ENCODE measurements at regions of chr6 and their contacts with region 1.

Region 1: GRCh38 chr6:75243333-75244062 is at the start of gene COX7A2:
- DNase-seq: peak; percentile 95
- H3K4me3 Mint-ChIP-seq: peak within 1 kb of the TSS; percentile 99
- H3K27ac Mint-ChIP-seq: peak within 1 kb of the TSS; percentile 100
- H3K4me1 Mint-ChIP-seq: peaks cover 15% of the 10 kb centered on the region
- H3K27me3 Mint-ChIP-seq: no peaks in the 10 kb centered on the region
- CTCF ChIP-seq: no peak
- total RNA-seq, gene COX7A2: 316 and 375 TPM in 2 replicates

Region 2: DNA sequence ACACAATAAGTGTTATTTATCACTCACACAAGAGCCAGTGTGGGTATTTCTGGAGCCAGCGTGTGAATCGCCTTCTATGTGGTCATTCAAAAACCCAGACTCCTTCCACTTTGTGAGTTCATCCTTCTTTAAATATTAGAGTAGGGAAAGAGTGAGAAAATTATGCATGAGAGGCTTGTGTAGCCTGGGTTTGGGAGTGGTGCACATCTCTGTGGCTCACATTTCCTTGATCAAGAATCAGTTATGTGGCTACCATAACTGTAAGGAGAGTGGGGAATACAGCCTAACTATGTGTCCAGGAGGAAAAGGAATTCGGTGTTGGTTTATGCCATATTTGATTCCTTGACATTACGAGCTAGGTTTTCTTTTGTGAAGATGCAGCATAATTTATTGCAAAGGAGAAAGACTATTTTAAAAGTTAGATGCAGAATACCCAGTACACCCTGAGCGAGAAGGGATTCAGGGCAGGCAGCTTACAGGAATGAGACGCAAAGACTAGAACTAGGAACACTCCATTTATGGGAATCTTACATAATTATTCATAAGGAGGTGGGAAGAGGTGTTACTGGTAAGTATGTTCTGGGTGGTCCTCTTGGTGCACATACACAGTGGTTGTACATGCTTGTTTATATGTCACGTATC is 676.1 kb before region 1 on chr6:
- CTCF ChIA-PET with region 1: no interaction called
- POLR2A ChIA-PET with region 1: no interaction called
- intact Hi-C with region 1: no loop called
- DNase-seq: no peak
- H3K4me3 Mint-ChIP-seq: no peak overlapping the region
- H3K27ac Mint-ChIP-seq: no peak overlapping the region
- H3K4me1 Mint-ChIP-seq: no peaks in the 10 kb centered on the region
- H3K27me3 Mint-ChIP-seq: no peaks in the 10 kb centered on the region
- CTCF ChIP-seq: no peak

Region 3: DNA sequence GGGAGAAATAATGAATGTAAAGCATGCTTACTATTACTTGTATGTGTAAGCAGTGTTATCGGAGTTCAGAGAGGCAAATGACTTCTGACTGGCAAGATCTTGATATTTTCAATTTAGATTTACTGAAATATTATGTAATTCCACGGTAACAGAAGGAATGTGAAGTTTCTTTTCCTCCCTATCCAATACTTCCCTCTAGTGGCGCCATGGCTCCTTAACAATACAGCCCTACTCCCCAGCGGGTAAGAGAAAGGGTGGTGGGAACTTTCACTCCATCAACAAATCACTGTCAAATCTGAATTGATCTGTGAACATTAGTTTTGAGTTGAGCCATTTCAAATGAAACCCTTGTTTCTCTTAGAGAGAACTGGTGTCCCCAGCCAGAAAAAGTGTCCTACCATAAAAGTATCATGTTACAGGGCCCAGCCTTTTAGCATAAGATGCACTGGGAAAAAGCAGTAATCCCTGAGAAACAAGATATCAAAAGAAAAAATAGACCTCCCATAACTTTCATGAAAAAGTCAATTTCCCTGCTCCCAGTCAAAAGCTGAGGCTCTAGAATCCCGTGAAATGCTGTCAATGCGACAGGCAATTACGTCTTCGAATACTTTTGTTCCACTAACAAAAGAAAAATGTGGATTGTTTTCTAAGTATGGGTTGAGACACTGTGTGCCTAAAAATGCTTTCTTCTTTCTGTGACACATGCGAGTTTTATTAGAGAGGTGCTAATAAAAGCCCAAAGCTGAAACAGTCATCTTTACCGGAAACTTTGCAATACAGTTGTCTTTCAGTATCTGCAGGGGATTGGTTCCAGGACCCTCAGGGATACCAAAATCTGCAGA is 12.8 kb before region 1 on chr6:
- CTCF ChIA-PET with region 1: interaction called, 3 read pairs
- POLR2A ChIA-PET with region 1: interaction called, 23 read pairs
- intact Hi-C with region 1: no loop called
- DNase-seq: peak; percentile 67
- H3K4me3 Mint-ChIP-seq: no peak overlapping the region
- H3K27ac Mint-ChIP-seq: no peak overlapping the region
- H3K4me1 Mint-ChIP-seq: no peaks in the 10 kb centered on the region
- H3K27me3 Mint-ChIP-seq: no peaks in the 10 kb centered on the region
- CTCF ChIP-seq: peak; percentile 66

Region 4: GRCh38 chr6:75257343-75258087 is 14.0 kb after region 1 on chr6:
- CTCF ChIA-PET with region 1: no interaction called
- POLR2A ChIA-PET with region 1: interaction called, 37 read pairs
- intact Hi-C with region 1: no loop called
- DNase-seq: no peak
- H3K4me3 Mint-ChIP-seq: no peak overlapping the region
- H3K27ac Mint-ChIP-seq: no peak overlapping the region
- H3K4me1 Mint-ChIP-seq: no peaks in the 10 kb centered on the region
- H3K27me3 Mint-ChIP-seq: no peaks in the 10 kb centered on the region
- CTCF ChIP-seq: no peak

Region 5: DNA sequence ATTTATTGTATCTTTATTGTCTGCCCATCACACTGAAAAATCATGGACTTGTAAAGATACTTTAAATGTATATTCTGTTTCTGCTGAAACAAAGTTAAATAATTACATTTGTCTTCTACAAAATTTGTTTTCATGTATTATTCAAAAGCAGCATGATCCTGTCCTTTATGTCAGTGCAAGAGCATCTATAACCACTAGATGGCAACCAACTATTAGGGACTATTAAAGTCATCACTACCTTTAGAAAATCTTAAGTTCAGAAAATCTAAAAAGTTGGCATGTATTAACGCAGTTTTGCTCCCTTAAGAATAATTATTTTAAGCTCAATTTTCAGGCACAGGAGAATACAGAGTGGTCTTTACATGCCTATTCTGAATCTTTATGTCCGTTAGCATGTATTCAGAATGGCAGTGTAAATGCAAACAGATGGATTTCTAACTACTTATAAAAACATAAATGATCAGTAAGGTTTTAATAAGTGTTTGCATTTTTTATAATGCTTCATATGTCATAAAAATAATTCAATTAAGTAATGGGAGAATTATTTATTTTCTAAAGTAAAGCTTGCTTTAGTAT is 23.3 kb after region 1 on chr6:
- CTCF ChIA-PET with region 1: interaction called, 10 read pairs
- POLR2A ChIA-PET with region 1: interaction called, 50 read pairs
- intact Hi-C with region 1: no loop called
- DNase-seq: peak; percentile 65
- H3K4me3 Mint-ChIP-seq: no peak overlapping the region
- H3K27ac Mint-ChIP-seq: no peak overlapping the region
- H3K4me1 Mint-ChIP-seq: peaks cover 12% of the 10 kb centered on the region
- H3K27me3 Mint-ChIP-seq: no peaks in the 10 kb centered on the region
- CTCF ChIP-seq: peak; percentile 55

Region 6: GRCh38 chr6:75275067-75275466 is 31.6 kb after region 1 on chr6:
- CTCF ChIA-PET with region 1: no interaction called
- POLR2A ChIA-PET with region 1: interaction called, 50 read pairs
- intact Hi-C with region 1: no loop called
- DNase-seq: peak; percentile 39
- H3K4me3 Mint-ChIP-seq: no peak overlapping the region
- H3K27ac Mint-ChIP-seq: peak overlapping the region; percentile 53
- H3K4me1 Mint-ChIP-seq: peaks cover 65% of the 10 kb centered on the region
- H3K27me3 Mint-ChIP-seq: no peaks in the 10 kb centered on the region
- CTCF ChIP-seq: no peak

Region 7: GRCh38 chr6:75284632-75285286 is 41.3 kb after region 1 on chr6 and contains the start of gene TMEM30A:
- CTCF ChIA-PET with region 1: interaction called, 3 read pairs
- POLR2A ChIA-PET with region 1: interaction called, 53 read pairs
- intact Hi-C with region 1: no loop called
- DNase-seq: peak; percentile 99
- H3K4me3 Mint-ChIP-seq: no peak within 1 kb of the TSS
- H3K27ac Mint-ChIP-seq: no peak within 1 kb of the TSS
- H3K4me1 Mint-ChIP-seq: peaks cover 21% of the 10 kb centered on the region
- H3K27me3 Mint-ChIP-seq: no peaks in the 10 kb centered on the region
- CTCF ChIP-seq: no peak
- total RNA-seq, gene TMEM30A: 53.7 and 71.4 TPM in 2 replicates

Region 8: DNA sequence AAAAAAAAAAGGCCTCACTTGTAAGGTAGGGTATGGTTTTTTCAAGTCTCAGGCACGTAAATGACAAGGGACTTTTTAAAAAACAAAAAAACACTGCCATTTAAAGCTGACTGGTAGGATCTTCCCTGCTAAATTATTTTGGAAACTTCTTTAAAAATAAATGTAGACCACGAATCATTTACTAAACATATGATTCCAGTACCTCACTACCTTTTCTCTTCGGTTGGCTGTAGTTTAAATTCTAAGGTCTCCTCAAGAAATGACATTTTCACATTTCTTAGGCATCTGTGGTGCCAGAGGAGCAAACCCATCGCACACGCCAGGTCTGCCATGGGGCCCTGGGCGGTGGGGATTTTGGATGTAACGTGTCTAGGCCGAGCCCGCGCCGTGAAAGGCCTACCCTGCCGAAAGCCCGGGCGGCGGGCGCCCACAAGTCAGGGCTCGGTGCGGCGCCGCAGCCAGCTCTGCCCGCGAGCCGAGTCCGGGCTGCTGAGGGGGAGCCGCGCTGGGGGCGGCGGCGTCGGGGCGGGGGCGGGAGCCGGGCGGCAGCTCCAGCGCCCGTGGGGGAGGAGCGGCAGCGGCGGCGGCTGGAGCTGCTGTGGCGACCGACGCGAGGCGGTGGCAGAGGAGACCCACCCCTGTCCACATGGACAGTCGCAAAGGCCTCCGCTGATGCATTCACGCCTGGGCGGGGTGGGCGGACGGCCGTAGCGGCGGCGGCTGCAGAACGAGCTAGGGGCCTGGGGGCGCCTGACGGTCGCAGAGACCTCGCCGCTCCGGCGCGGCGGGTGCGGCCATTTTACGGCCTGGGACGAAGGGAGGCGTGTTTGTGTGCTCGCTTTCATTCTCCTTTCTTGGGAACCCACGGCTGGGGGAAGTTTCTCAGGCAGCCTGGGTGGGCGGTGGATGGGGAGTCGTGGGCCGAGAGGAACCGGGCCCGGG is 358.1 kb after region 1 on chr6 and contains the start of gene SENP6:
- CTCF ChIA-PET with region 1: no interaction called
- POLR2A ChIA-PET with region 1: interaction called, 22 read pairs
- intact Hi-C with region 1: no loop called
- DNase-seq: peak; percentile 76
- H3K4me3 Mint-ChIP-seq: peak within 1 kb of the TSS; percentile 97
- H3K27ac Mint-ChIP-seq: peak within 1 kb of the TSS; percentile 100
- H3K4me1 Mint-ChIP-seq: peaks cover 15% of the 10 kb centered on the region
- H3K27me3 Mint-ChIP-seq: no peaks in the 10 kb centered on the region
- CTCF ChIP-seq: no peak
- total RNA-seq, gene SENP6: 101 TPM in 2 replicates